ENCODE measurements at regions of chr19 and their contacts with region 1.

Region 1: GRCh38 chr19:53849237-53849676 is 18.4 kb upstream of the MYADM start:
- DNase-seq: no peak
- H3K4me3 Mint-ChIP-seq: no peak overlapping the region
- H3K27ac Mint-ChIP-seq: no peak overlapping the region
- H3K4me1 Mint-ChIP-seq: peaks cover 5% of the 10 kb centered on the region
- H3K27me3 Mint-ChIP-seq: no peaks in the 10 kb centered on the region
- CTCF ChIP-seq: no peak

Region 2: DNA sequence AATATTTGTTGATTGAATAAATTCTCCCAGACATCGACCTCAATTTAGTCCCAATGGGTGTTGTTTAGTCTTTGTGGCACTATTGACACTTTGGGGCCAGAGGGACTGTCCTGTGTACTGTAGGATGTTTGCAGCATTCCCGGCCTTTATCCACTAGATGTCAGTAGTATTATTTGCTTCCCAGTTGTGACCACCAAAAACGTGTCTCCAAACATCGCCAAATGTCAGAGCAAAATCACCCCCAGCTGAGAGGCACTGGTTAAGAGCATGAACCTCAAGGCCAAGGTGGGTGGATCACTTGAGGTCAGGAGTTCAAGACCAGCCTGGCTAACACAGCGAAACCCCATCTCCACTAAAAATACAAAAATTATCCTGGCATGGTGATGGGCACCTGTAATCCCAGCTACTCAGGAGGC is 40.5 kb before region 1 on chr19:
- CTCF ChIA-PET with region 1: no interaction called
- POLR2A ChIA-PET with region 1: no interaction called
- intact Hi-C with region 1: no loop called
- DNase-seq: peak; percentile 41
- H3K4me3 Mint-ChIP-seq: no peak overlapping the region
- H3K27ac Mint-ChIP-seq: no peak overlapping the region
- H3K4me1 Mint-ChIP-seq: no peaks in the 10 kb centered on the region
- H3K27me3 Mint-ChIP-seq: no peaks in the 10 kb centered on the region
- CTCF ChIP-seq: peak; percentile 24

Region 3: GRCh38 chr19:53867225-53868090 is 18.2 kb after region 1 on chr19 and contains the start of gene MYADM:
- CTCF ChIA-PET with region 1: interaction called, 15 read pairs
- POLR2A ChIA-PET with region 1: no interaction called
- intact Hi-C with region 1: no loop called
- DNase-seq: peak; percentile 97
- H3K4me3 Mint-ChIP-seq: peak within 1 kb of the TSS; percentile 97
- H3K27ac Mint-ChIP-seq: peak within 1 kb of the TSS; percentile 100
- H3K4me1 Mint-ChIP-seq: peaks cover 20% of the 10 kb centered on the region
- H3K27me3 Mint-ChIP-seq: no peaks in the 10 kb centered on the region
- CTCF ChIP-seq: no peak
- total RNA-seq, gene MYADM: 39.0 and 43.3 TPM in 2 replicates

Region 4: DNA sequence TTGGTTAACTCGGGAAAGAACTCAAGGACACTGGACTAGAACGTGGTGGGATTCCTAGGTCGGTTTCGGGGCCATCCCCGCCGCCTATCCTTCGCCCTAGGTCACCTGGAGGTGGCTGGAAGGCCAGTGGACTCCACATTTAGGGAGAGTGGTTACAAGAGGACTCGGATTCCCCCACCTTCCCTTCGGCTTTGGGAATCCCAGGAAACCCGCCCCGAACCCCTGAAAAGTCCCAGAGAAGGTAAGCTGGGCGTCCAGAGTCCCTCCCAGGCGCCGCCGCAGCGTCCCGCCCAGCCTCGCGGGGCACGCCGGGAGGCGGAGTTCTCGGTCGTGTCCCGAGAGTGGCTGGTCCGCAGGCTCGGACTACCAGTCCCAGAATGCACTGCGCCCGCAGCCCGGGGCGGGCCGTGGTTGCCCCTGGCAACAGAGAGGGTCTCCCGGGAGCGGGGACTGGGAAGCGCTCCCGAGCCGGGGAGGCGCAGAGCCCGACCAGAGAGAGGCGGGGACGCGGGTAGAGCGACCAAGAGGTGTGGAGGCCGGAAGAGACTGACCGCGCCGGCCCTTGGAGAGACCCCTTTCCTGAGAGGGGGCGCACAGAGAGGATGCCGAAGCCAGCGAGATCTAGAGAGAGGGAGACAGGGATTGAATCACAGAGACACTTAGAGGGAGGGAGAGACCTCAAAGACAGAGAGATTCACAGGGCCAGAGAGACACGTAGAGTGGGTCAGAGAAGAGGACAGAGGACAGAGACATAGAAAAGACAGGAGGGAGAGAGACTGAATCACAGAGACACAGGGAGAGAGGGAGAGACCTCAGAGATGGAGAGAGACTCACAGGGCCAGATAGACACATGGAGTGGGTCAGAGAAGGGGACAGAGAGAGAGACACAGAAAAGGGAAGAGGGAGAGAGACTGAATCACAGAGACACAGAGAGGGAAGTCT is 30.2 kb after region 1 on chr19:
- CTCF ChIA-PET with region 1: interaction called, 3 read pairs
- POLR2A ChIA-PET with region 1: no interaction called
- intact Hi-C with region 1: loop called (anchors 5 kb)
- DNase-seq: peak; percentile 78
- H3K4me3 Mint-ChIP-seq: no peak overlapping the region
- H3K27ac Mint-ChIP-seq: no peak overlapping the region
- H3K4me1 Mint-ChIP-seq: no peaks in the 10 kb centered on the region
- H3K27me3 Mint-ChIP-seq: no peaks in the 10 kb centered on the region
- CTCF ChIP-seq: no peak

Region 5: DNA sequence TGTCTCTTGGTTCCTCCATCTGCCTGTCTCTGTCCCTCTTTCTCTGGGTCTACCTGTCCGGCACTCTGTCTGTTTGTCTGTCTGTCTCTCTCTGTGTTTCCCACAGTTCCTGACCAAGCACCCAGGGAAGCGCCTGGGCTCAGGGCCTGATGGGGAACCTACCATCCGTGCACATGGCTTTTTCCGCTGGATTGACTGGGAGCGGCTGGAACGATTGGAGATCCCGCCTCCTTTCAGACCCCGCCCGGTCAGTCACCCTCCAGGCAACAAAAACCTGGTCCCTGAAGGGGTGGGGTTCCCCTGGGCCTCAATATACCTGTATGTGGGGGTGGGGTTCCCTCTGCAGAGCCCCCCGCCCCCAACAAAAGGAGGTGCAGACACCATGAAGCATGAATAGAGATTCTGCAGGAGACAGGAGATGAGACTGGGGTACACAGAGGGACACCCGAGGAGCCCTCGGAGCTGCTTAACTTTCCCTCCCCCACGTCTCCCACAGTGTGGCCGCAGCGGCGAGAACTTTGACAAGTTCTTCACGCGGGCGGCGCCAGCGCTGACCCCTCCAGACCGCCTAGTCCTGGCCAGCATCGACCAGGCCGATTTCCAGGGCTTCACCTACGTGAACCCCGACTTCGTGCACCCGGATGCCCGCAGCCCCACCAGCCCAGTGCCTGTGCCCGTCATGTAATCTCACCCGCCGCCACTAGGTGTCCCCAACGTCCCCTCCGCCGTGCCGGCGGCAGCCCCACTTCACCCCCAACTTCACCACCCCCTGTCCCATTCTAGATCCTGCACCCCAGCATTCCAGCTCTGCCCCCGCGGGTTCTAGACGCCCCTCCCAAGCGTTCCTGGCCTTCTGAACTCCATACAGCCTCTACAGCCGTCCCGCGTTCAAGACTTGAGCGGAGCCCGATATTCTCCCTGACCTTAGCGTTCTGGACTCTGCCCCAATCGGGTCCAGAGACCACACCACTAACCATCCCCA is 57.2 kb after region 1 on chr19:
- CTCF ChIA-PET with region 1: interaction called, 3 read pairs
- POLR2A ChIA-PET with region 1: no interaction called
- intact Hi-C with region 1: loop called (anchors 5 kb)
- DNase-seq: peak; percentile 29
- H3K4me3 Mint-ChIP-seq: peak overlapping the region; percentile 28
- H3K27ac Mint-ChIP-seq: no peak overlapping the region
- H3K4me1 Mint-ChIP-seq: peaks cover 7% of the 10 kb centered on the region
- H3K27me3 Mint-ChIP-seq: peaks cover 79% of the 10 kb centered on the region
- CTCF ChIP-seq: peak; percentile 92

Measured in MCF 10A (cell line).